ENCODE measurements at regions of chr15 and their contacts with region 1.

Region 1: GRCh38 chr15:69058830-69059556 is 44.5 kb downstream of the NOX5 start:
- DNase-seq: peak; percentile 82 to 87 (median 86)
- ATAC-seq: peak; percentile 81 to 91 (median 86)
- H3K4me3 ChIP-seq: peak overlapping the region in 1 of 3 donors; percentile 5
- H3K27ac ChIP-seq: no peak overlapping the region
- H3K4me1 ChIP-seq: peaks cover 0 to 9% (median 4%) of the 10 kb centered on the region in 4 donors
- H3K27me3 ChIP-seq: no peaks in the 10 kb centered on the region
- CTCF ChIP-seq: peak; percentile 82 to 95 (median 87)
- POLR2A ChIP-seq: no peak

Region 2: DNA sequence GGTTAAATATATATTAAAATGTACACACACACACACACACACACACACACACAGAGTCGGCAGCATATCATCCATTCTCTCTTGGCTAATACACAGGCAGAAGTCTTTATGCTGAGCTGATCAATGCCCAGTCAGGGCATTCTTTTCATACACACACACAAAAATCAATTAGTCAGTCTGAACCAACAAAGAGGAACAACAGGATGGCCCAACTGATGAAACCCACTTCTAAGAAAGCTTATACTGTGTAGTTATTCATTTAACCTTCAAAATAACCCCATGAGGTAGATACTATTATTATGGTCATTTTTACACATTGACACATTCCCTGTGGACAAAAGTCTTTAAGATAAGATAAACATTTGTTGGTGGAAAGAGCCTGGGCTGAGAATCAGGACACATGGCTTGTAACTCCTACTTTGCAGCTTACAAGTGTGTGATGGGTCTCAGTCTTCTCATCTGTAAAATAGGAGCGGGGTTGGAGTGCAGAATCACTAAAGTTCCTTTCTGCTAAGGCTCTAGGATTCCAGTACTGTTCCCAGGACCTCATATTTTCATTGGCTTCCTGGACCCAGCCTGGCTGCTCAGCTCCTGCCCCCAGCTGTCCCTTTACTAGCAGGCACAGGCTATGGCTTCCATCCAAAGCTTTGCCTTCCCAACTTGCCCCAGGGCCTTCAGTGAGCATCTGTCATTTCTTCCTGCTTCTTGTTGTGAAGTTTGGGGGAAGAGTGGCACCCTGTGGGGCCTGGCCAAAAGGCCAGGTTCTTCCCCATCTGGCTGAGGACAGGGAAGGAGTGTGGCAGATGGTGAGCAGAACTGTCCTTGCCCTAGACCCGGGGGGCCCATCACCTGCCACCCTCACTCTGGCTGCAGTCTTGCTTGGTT is 74.2 kb after region 1 on chr15:
- intact Hi-C with region 1: loop called in 1 of 2 experiments (anchors 10 kb)
- DNase-seq: no peak
- ATAC-seq: peak; percentile 12 to 52 (median 20)
- H3K4me3 ChIP-seq: no peak overlapping the region
- H3K27ac ChIP-seq: no peak overlapping the region
- H3K4me1 ChIP-seq: peaks cover 0 to 57% (median 26%) of the 10 kb centered on the region in 4 donors
- H3K27me3 ChIP-seq: no peaks in the 10 kb centered on the region
- CTCF ChIP-seq: no peak
- POLR2A ChIP-seq: no peak

Region 3: GRCh38 chr15:69232144-69232543 is 173.2 kb after region 1 on chr15:
- intact Hi-C with region 1: loop called (anchors 10 kb)
- DNase-seq: no peak
- ATAC-seq: no peak
- H3K4me3 ChIP-seq: no peak overlapping the region
- H3K27ac ChIP-seq: no peak overlapping the region
- H3K4me1 ChIP-seq: no peaks in the 10 kb centered on the region
- H3K27me3 ChIP-seq: no peaks in the 10 kb centered on the region
- CTCF ChIP-seq: no peak
- POLR2A ChIP-seq: no peak

Region 4: DNA sequence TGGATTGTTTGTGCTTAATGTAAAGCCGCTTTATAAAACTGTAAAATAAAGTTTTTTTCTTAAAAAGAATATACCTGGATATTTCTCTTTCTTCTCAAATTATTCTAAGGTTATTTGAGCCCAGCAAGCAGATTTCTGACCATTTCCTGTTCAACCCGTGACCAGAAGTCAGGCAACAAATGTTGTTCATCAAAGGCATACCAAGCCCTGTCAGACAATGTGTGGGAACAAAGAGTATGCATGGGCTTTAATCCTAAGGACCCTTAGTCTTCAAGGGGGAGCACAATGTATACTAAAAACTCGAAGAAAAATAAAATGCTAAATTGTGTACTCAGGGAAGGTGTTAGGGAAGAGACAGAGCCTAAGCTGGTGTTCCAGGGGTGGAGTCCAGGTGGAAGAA is 213.1 kb after region 1 on chr15:
- intact Hi-C with region 1: loop called in 1 of 2 experiments (anchors 10 kb)
- DNase-seq: no peak
- ATAC-seq: no peak
- H3K4me3 ChIP-seq: no peak overlapping the region
- H3K27ac ChIP-seq: no peak overlapping the region
- H3K4me1 ChIP-seq: no peaks in the 10 kb centered on the region
- H3K27me3 ChIP-seq: no peaks in the 10 kb centered on the region
- CTCF ChIP-seq: no peak
- POLR2A ChIP-seq: no peak

Region 5: GRCh38 chr15:69394556-69395282 is 335.7 kb after region 1 on chr15:
- intact Hi-C with region 1: loop called (anchors 5 kb)
- DNase-seq: peak; percentile 75 to 80 (median 76)
- ATAC-seq: peak; percentile 90 to 97 (median 94)
- H3K4me3 ChIP-seq: no peak overlapping the region
- H3K27ac ChIP-seq: no peak overlapping the region
- H3K4me1 ChIP-seq: peaks cover 0 to 7% (median 0%) of the 10 kb centered on the region in 4 donors
- H3K27me3 ChIP-seq: peaks cover 0 to 5% of the 10 kb centered on the region in 2 donors
- CTCF ChIP-seq: peak; percentile 87 to 96 (median 94)
- POLR2A ChIP-seq: no peak